Activated B cell treated with CpG ODN at 0.5 μM for 24 hours (primary cell): ENCODE measurements at regions of chr4 and their contacts with region 1.

Region 1: DNA sequence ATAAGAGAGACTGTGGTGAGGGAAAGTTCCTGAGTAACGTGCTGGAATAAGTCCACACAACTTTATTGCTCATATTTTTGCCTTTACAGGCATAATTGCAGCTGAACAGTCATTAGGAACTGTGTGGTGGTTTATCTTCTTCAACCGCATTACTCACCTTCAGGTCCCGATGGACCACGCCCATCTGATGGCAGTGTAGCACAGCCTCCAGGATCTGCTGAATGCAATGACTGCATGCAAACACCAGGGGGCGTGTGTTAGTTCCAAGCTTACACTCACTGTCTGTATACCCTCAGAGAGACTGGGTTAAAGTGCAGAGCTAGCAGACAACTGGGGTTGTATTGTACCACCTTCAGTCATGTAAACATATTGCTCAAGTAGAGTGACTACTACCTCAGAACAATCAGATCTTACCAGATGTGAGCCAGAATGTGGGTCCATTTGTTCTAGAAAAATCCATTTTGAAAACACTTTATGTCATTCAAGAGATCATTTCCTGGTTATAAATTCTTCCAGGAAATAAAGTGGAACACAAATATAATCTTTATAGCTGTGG is 214.0 kb downstream of the CAMK2D start:
- DNase-seq: peak; percentile 62
- ATAC-seq: peak; percentile 98
- H3K4me3 Mint-ChIP-seq: no peak overlapping the region
- H3K27ac Mint-ChIP-seq: peak overlapping the region; percentile 69
- H3K4me1 Mint-ChIP-seq: peaks cover 23% of the 10 kb centered on the region
- H3K27me3 Mint-ChIP-seq: no peaks in the 10 kb centered on the region
- CTCF ChIP-seq: peak; percentile 67

Region 2: DNA sequence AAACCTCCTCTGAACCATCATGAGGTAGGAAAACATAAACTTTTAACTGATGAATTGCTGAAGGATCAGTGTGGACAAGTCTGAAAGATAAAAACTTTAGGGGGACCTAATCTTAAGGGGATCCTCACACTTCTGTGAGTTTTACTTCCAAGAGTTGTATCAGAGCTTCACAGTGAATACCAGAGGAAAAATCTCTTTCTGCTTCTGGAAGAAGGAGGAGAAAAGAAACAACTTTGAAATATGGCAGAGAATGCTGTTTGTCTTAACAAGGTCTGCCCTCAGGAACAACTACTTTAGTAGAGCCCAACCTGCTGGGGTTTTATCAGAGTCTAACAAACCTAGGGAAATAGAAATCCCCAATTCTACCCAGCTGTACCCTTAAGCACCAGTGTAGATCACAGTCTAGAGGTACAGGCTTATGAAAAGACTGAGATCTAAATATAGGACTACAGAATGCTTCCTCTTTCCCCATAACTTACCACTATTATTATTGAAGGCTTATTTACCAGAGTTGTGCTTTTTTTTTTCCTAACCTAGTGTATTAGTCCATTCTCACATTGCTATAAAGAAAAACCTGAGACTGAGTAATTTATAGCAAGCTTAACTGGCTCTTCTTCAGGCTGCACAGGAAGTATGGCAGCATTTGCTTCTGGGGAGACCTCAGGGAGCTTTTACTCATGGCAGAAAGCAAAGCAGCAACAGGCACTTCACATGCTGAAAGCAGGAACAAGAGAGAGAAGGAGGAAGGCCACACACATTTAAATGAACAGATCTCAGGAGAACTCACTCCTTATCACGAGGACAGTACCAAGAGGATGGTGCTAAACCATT is 46.0 kb after region 1 on chr4:
- CTCF ChIA-PET with region 1: interaction called, 8 read pairs
- POLR2A ChIA-PET with region 1: interaction called, 4 read pairs
- intact Hi-C with region 1: loop called (anchors 1 kb)
- DNase-seq: no peak
- ATAC-seq: peak; percentile 85
- H3K4me3 Mint-ChIP-seq: peak overlapping the region; percentile 46
- H3K27ac Mint-ChIP-seq: peak overlapping the region; percentile 90
- H3K4me1 Mint-ChIP-seq: peaks cover 85% of the 10 kb centered on the region
- H3K27me3 Mint-ChIP-seq: no peaks in the 10 kb centered on the region
- CTCF ChIP-seq: no peak

Region 3: GRCh38 chr4:113673450-113673849 is 125.9 kb after region 1 on chr4:
- CTCF ChIA-PET with region 1: interaction called, 17 read pairs
- POLR2A ChIA-PET with region 1: interaction called, 6 read pairs
- intact Hi-C with region 1: loop called (anchors 1 kb)
- DNase-seq: peak; percentile 14
- ATAC-seq: peak; percentile 95
- H3K4me3 Mint-ChIP-seq: peak overlapping the region; percentile 41
- H3K27ac Mint-ChIP-seq: peak overlapping the region; percentile 53
- H3K4me1 Mint-ChIP-seq: peaks cover 54% of the 10 kb centered on the region
- H3K27me3 Mint-ChIP-seq: no peaks in the 10 kb centered on the region
- CTCF ChIP-seq: no peak

Region 4: GRCh38 chr4:113809311-113809710 is 261.7 kb after region 1 on chr4:
- CTCF ChIA-PET with region 1: no interaction called
- POLR2A ChIA-PET with region 1: no interaction called
- intact Hi-C with region 1: no loop called
- DNase-seq: no peak
- ATAC-seq: no peak
- H3K4me3 Mint-ChIP-seq: no peak overlapping the region
- H3K27ac Mint-ChIP-seq: no peak overlapping the region
- H3K4me1 Mint-ChIP-seq: no peaks in the 10 kb centered on the region
- H3K27me3 Mint-ChIP-seq: peaks cover 2% of the 10 kb centered on the region
- CTCF ChIP-seq: no peak

Region 5: DNA sequence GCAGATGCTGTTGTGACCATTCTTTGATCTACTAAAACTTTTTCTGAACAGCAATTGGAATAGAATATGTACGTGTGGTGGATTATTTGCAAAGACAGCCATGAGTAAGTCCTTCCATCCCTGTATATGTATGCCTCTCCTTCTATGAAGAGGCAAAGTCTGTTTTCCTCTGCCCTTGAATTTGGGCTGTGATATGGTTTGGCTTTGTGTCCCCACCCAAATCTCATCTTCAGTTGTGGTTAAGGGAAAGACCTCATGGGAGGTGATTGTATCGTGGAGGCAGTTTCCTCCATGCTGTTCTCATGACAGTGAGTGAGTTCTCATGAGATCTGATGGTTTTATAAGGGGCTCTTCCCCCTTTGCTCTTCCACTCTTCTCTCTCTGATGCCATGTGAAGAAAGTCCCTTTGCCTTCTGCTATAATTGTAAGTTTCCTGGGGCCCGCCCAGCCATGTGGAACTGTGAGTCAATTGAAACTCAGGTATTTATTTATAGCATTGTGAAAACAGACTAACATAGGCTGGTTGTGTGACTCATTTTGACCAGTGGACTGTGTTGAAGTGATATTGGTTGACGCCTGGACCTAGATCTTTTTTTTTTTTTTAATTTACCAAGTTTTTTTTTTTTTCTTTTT is 322.3 kb after region 1 on chr4:
- CTCF ChIA-PET with region 1: no interaction called
- POLR2A ChIA-PET with region 1: no interaction called
- intact Hi-C with region 1: loop called (anchors 10 kb)
- DNase-seq: peak; percentile 40
- ATAC-seq: peak; percentile 94
- H3K4me3 Mint-ChIP-seq: peak overlapping the region; percentile 63
- H3K27ac Mint-ChIP-seq: peak overlapping the region; percentile 90
- H3K4me1 Mint-ChIP-seq: peaks cover 19% of the 10 kb centered on the region
- H3K27me3 Mint-ChIP-seq: no peaks in the 10 kb centered on the region
- CTCF ChIP-seq: no peak

Region 6: DNA sequence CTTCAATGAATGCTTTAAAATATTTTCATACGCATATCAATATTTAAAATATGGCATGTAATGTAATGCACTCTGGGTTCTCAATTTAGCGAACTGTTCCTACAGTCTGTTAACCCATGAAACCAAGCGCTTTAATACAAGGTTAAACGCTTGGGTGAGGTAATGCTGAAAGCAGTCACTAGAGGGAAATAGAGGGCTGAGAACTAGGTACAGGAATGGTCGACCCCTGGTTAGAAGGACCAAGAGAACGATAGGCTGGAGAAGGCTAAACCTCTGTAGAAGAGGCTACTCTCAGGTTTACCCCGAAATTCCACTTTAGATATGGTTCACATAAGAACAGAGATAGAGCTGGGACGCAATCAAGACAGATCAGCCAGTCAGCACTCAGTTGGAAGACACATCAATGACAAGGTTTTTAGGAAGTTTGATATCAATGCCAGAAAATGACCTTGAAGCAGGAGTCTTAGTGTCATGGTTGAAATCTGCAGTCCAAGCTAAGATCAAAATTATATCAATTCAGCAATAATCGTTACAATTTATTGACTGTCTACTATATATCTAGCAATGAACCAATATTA is 405.0 kb after region 1 on chr4:
- CTCF ChIA-PET with region 1: interaction called, 5 read pairs
- POLR2A ChIA-PET with region 1: no interaction called
- intact Hi-C with region 1: loop called (anchors 5 kb)
- DNase-seq: no peak
- ATAC-seq: peak; percentile 71
- H3K4me3 Mint-ChIP-seq: no peak overlapping the region
- H3K27ac Mint-ChIP-seq: no peak overlapping the region
- H3K4me1 Mint-ChIP-seq: peaks cover 2% of the 10 kb centered on the region
- H3K27me3 Mint-ChIP-seq: peaks cover 16% of the 10 kb centered on the region
- CTCF ChIP-seq: peak; percentile 55

Region 7: DNA sequence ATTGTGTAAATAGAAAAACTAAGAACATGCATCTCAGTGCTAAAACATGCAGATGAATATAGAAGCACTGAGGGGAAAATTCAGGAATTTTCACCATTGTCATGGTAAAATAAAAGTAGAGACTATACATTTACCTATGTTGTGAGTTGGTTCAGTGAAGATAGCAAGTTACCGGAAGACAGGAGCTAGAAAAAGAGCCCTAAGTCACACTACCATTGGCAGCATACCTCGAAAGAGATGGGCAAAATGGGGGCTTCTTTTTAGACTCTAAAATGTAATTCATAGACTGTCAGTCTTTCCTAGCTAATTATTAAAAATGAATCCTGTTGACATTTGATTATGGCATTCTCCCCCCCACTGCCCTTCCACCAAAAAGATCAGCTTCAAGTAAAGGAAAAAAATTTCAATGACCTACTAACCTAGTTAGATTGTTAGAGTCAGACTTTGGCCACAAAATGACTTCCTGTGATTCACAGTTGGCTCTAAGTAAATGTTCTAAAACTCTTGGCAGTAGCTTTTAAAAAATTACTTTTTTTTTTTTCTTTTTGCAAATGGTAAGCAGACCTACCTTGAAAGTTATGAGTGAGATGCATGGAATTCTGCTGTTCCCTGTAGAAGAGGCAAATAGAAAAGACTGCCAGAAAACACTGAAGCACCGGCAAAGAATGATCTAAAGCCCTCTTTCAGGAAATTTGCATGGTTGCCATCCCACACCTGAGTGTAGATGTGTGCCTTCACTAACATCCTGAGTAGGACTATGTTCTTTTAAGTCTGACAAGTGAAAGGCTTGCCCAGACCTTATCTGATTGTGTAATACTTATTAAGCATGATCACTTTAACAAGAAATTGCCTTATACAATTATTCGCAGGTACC is 458.2 kb after region 1 on chr4:
- CTCF ChIA-PET with region 1: no interaction called
- POLR2A ChIA-PET with region 1: no interaction called
- intact Hi-C with region 1: no loop called
- DNase-seq: no peak
- ATAC-seq: no peak
- H3K4me3 Mint-ChIP-seq: no peak overlapping the region
- H3K27ac Mint-ChIP-seq: no peak overlapping the region
- H3K4me1 Mint-ChIP-seq: no peaks in the 10 kb centered on the region
- H3K27me3 Mint-ChIP-seq: peaks cover 19% of the 10 kb centered on the region
- CTCF ChIP-seq: no peak

Region 8: GRCh38 chr4:114442856-114443255 is 895.3 kb after region 1 on chr4:
- CTCF ChIA-PET with region 1: no interaction called
- POLR2A ChIA-PET with region 1: no interaction called
- intact Hi-C with region 1: no loop called
- DNase-seq: no peak
- ATAC-seq: no peak
- H3K4me3 Mint-ChIP-seq: no peak overlapping the region
- H3K27ac Mint-ChIP-seq: no peak overlapping the region
- H3K4me1 Mint-ChIP-seq: no peaks in the 10 kb centered on the region
- H3K27me3 Mint-ChIP-seq: peaks cover 12% of the 10 kb centered on the region
- CTCF ChIP-seq: no peak